Right ventricle myocardium inferior (tissue), 1 donor: ENCODE measurements at regions of chr6 and their contacts with region 1.

Region 1: GRCh38 chr6:35635601-35636597 is 52.8 kb downstream of the FKBP5 start:
- DNase-seq: no peak
- ATAC-seq: no peak

Region 2: DNA sequence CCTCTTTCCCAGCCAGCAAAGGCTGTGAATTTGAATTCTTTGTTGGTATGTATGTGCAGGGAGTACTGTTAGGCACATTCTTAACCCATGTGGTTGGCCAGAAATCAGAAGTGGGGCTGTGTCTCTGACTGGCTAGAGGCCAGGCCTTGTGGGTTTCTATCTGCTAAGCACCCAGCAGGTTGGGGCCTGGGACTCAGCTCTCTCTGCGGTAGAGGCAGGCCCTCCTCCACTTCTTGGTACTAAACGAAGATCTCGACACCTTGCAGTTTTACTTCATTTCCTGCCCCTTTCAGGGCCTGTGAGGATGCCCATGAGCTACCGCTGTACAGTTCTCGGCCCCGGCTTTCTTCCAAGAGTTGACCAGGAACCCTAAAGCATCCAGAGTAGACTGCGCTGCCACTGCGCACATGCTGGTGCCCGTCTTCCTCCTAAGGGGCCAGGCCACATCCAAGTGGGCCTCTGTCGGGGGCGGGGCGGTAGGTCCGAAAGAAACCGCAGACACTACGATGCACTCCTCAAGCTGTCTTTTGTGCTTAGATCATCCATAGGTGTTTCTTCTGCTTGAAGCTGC is 545.9 kb before region 1 on chr6:
- intact Hi-C with region 1: no loop called
- DNase-seq: no peak
- ATAC-seq: no peak

Region 3: DNA sequence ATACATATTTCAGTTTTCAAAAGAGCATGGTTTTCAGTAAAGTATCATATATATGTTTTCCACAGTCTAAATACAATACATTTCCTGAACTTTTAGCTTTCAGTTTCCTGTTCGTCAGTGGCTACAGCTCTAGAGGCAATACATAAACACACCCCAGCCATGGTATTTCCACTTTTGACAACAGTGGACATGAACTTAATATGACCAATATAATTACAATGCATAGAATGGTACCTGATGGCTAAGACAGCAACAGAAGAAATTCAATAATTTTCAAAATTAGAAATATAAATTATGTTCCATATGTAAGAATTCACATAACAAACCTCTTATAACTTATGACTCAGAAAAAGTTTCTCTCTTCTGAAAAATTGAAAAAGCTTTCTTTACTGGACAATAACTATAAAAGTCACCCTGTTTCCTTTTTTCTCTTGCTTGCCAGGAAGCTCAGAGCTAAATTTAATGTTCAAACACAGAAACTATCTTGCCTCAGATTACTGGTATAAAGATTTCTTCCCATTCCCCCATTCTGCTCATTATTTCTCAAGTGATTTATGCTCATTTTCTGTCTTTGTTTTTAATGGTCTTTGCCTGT is 33.6 kb after region 1 on chr6:
- intact Hi-C with region 1: loop called (anchors 5 kb)
- DNase-seq: no peak
- ATAC-seq: no peak